ENCODE measurements at regions of chr13 and their contacts with region 1.

Region 1: GRCh38 chr13:32310134-32310706 is 4.9 kb downstream of the ZAR1L start:
- DNase-seq: peak; percentile 69
- H3K4me3 ChIP-seq: no peak overlapping the region
- H3K27ac ChIP-seq: no peak overlapping the region
- H3K4me1 ChIP-seq: no peaks in the 10 kb centered on the region
- H3K27me3 ChIP-seq: no peaks in the 10 kb centered on the region
- CTCF ChIP-seq: peak; percentile 80

Region 2: DNA sequence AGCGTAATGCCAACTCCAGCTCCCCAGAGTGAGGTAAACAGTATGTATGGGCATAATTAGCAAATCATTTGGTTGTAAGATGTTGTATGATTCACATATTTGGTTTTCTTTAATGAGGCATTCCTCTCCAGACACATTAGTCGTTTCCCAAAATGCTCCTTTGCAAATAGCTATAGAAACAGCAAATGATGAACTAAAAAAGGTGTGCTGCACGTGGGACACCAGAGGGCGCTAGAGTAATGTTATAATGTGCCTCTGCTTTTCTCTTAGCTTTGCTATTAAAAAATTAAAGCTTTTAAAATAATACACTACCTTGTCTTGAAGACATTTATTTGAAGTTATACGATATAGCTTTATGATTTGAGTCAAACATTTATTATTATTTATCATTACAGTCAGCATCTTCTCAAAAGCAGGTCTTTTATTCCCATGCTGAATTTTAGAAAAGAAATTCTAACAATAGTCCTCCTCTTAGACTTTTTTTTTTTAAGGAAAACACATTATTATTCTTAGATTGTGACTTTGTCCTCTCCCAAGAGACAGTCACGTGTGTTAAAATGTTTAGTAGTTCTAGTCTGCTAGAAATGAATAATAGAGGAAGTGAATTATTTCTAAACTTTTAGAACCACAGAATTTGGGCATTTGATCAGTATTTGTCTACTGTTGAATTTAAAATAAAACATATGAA is 400.2 kb before region 1 on chr13:
- CTCF ChIA-PET with region 1: interaction called, 6 read pairs
- POLR2A ChIA-PET with region 1: no interaction called
- intact Hi-C with region 1: loop called (anchors 1 kb)
- DNase-seq: peak; percentile 65
- H3K4me3 ChIP-seq: no peak overlapping the region
- H3K27ac ChIP-seq: no peak overlapping the region
- H3K4me1 ChIP-seq: no peaks in the 10 kb centered on the region
- H3K27me3 ChIP-seq: no peaks in the 10 kb centered on the region
- CTCF ChIP-seq: peak; percentile 93

Region 3: GRCh38 chr13:32019612-32020233 is 290.5 kb before region 1 on chr13:
- CTCF ChIA-PET with region 1: no interaction called
- POLR2A ChIA-PET with region 1: no interaction called
- intact Hi-C with region 1: loop called (anchors 5 kb)
- DNase-seq: peak; percentile 59
- H3K4me3 ChIP-seq: no peak overlapping the region
- H3K27ac ChIP-seq: no peak overlapping the region
- H3K4me1 ChIP-seq: no peaks in the 10 kb centered on the region
- H3K27me3 ChIP-seq: no peaks in the 10 kb centered on the region
- CTCF ChIP-seq: peak; percentile 78

Region 4: GRCh38 chr13:32135655-32136054 is 174.6 kb before region 1 on chr13:
- CTCF ChIA-PET with region 1: no interaction called
- POLR2A ChIA-PET with region 1: no interaction called
- intact Hi-C with region 1: no loop called
- DNase-seq: no peak
- H3K4me3 ChIP-seq: no peak overlapping the region
- H3K27ac ChIP-seq: no peak overlapping the region
- H3K4me1 ChIP-seq: no peaks in the 10 kb centered on the region
- H3K27me3 ChIP-seq: no peaks in the 10 kb centered on the region
- CTCF ChIP-seq: no peak

Region 5: GRCh38 chr13:32164622-32165268 is 145.5 kb before region 1 on chr13:
- CTCF ChIA-PET with region 1: interaction called, 3 read pairs
- POLR2A ChIA-PET with region 1: no interaction called
- intact Hi-C with region 1: loop called (anchors 1 kb)
- DNase-seq: peak; percentile 90
- H3K4me3 ChIP-seq: no peak overlapping the region
- H3K27ac ChIP-seq: no peak overlapping the region
- H3K4me1 ChIP-seq: no peaks in the 10 kb centered on the region
- H3K27me3 ChIP-seq: no peaks in the 10 kb centered on the region
- CTCF ChIP-seq: peak; percentile 92

Region 6: DNA sequence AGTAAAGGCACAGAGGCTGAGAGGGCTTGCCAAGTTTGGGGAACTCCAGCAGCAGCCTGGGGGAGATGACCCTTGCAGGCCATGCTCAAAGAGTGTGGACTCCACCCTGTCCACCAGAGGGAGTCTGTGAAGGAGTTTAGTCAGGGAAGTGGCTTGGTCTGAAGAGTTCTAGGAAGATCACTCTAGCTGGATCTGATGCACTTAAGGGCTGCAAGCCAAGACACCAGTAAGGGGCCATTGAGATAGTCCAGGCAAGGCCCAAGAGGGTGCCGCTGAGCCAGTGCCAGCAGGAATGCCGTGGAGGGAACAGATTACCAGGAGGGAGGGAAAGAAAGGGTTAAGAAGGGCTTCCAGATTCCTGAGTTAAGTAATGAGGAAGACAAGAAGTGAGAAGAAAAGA is 63.8 kb before region 1 on chr13:
- CTCF ChIA-PET with region 1: interaction called, 3 read pairs
- POLR2A ChIA-PET with region 1: no interaction called
- intact Hi-C with region 1: loop called (anchors 2 kb)
- DNase-seq: peak; percentile 82
- H3K4me3 ChIP-seq: no peak overlapping the region
- H3K27ac ChIP-seq: no peak overlapping the region
- H3K4me1 ChIP-seq: no peaks in the 10 kb centered on the region
- H3K27me3 ChIP-seq: no peaks in the 10 kb centered on the region
- CTCF ChIP-seq: peak; percentile 72

Region 7: GRCh38 chr13:32403108-32403507 is 92.9 kb after region 1 on chr13:
- CTCF ChIA-PET with region 1: no interaction called
- POLR2A ChIA-PET with region 1: no interaction called
- intact Hi-C with region 1: no loop called
- DNase-seq: no peak
- H3K4me3 ChIP-seq: no peak overlapping the region
- H3K27ac ChIP-seq: no peak overlapping the region
- H3K4me1 ChIP-seq: no peaks in the 10 kb centered on the region
- H3K27me3 ChIP-seq: no peaks in the 10 kb centered on the region
- CTCF ChIP-seq: no peak

Region 8: DNA sequence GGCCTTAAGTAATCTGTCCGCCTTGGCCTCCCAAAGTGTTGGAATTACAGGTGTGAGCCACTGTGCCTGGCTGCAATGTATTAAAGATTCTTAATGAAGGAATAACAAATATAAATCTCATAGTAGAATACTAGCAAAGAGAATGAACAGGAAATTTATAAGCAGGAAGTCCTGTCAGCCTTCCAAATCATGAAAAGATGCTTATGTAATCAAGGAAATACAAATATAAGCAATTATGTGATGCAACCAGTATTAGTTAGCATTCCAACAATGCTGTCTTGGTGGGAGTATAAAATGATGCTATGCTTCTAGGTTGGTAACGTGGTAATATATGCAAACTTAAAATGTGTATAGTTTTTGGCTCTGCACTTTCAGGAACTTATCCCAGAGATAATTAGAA is 409.8 kb after region 1 on chr13:
- CTCF ChIA-PET with region 1: no interaction called
- POLR2A ChIA-PET with region 1: no interaction called
- intact Hi-C with region 1: no loop called
- DNase-seq: peak; percentile 60
- H3K4me3 ChIP-seq: no peak overlapping the region
- H3K27ac ChIP-seq: peak overlapping the region; percentile 22
- H3K4me1 ChIP-seq: peaks cover 7% of the 10 kb centered on the region
- H3K27me3 ChIP-seq: no peaks in the 10 kb centered on the region
- CTCF ChIP-seq: no peak

Region 9: GRCh38 chr13:32940601-32941000 is 630.4 kb after region 1 on chr13:
- CTCF ChIA-PET with region 1: no interaction called
- POLR2A ChIA-PET with region 1: no interaction called
- intact Hi-C with region 1: no loop called
- DNase-seq: no peak
- H3K4me3 ChIP-seq: no peak overlapping the region
- H3K27ac ChIP-seq: no peak overlapping the region
- H3K4me1 ChIP-seq: no peaks in the 10 kb centered on the region
- H3K27me3 ChIP-seq: no peaks in the 10 kb centered on the region
- CTCF ChIP-seq: no peak